RWPE1 (cell line): ENCODE measurements at regions of chr5 and their contacts with region 1.

Region 1: GRCh38 chr5:176543428-176544173 is 5.5 kb upstream of the CDHR2 start:
- DNase-seq: peak; percentile 64
- H3K27ac ChIP-seq: peak overlapping the region; percentile 94
- CTCF ChIP-seq: no peak

Region 2: DNA sequence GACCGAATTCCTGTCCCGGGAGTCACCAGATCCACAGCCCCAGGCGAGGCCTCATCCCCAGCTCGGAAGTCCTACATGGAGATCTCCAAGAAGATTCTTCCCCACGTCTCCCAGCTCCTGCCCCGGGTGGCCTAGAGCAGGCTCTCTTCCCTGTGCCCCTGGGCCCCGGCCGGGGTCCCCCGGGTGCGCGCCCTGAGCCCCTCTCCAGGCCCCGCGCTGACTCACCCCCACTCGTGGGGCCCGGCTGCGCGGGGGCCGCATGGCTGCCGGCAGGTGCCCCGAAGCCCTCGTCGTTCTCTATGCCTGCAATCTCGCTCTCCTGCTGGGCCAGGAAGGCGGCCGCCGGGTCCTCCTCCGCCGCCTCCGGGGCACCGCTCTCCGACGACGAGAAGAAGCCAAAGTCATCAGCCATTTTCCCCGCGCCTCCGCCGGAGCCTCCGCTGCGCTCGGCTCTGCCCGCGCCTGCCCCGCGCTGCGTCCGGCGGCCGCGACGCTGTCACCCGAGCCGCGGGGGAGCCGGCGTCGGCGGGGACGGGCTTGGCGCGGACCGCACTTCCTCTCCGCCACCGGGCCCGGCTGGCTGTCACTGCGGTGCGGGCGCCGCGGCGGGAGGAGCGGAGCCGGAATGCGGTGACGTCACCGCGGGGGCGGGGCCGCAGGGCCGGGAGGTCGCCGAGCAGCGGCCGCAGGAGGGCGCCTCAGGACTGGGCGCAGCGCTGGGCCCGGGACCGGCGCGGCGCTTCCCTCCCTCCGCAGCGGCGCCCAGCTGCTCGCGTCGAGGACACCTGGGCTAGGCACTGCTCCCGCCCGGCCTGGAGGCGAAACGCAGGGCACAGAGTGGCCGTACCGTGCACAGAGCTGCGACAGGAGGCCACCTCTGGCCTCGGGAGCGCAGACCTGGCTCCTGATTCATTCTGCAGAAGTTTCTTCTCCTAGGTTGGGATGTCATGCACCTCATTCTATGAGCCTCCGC is 127.4 kb before region 1 on chr5 and contains the start of gene CLTB:
- CTCF ChIA-PET with region 1: interaction called, 18 read pairs
- POLR2A ChIA-PET with region 1: interaction called, 4 read pairs
- DNase-seq: peak; percentile 90
- H3K27ac ChIP-seq: peak within 1 kb of the TSS; percentile 99
- CTCF ChIP-seq: peak; percentile 99

Region 3: DNA sequence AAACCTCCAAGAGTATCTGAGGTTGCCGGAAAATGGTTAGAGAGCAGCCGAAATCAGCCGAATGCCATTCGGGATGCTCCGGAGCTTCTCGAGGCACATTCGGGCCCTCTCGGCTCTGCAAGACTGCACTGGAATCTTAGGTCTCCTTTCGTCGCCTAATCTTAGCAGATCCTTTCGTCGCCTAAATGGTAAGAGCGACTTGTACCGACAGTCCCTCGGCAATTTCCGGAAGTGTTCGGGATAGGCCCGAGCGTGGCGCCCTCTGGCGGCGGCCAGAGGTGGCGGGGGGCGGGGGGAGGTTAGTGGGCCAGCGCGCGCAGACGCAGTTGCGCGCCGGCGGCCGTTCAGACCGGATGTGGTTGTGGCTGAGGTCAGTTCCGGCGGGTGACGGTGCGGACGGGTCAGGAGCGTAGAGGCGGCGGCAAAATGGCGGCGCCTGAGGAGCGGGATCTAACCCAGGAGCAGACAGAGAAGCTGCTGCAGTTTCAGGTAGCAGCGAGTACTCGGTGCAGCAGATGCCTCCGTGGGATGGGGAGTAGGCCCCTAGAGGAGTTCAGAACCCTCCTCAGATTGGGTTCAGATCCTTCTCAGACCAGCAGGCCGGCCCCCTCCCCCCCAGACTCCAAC is 95.5 kb before region 1 on chr5 and contains the start of gene FAF2:
- CTCF ChIA-PET with region 1: interaction called, 10 read pairs
- POLR2A ChIA-PET with region 1: interaction called, 5 read pairs
- DNase-seq: peak; percentile 100
- H3K27ac ChIP-seq: peak within 1 kb of the TSS; percentile 97
- CTCF ChIP-seq: peak; percentile 100

Region 4: DNA sequence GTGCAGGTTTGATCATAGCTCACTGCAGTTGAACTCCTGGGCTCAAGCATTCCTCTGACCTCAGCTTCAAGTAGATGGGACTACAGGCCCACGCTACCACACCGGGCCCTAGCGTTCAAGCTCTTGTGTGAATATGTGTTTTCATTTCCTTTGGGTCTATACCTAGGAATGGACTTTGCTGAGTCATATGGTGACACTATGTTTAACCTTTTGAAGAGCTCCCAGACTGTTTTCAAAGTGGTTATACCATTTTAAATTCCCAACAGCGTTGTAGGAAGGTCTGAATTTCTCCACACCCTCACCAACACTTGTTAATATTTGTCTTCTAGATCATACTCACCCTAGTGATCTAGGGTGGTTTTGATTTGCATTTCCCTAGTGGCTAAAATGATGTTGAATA is 61.9 kb before region 1 on chr5:
- CTCF ChIA-PET with region 1: no interaction called
- POLR2A ChIA-PET with region 1: no interaction called
- DNase-seq: no peak
- H3K27ac ChIP-seq: peak overlapping the region; percentile 48
- CTCF ChIP-seq: no peak

Region 5: GRCh38 chr5:176561259-176561658 is 17.7 kb after region 1 on chr5:
- CTCF ChIA-PET with region 1: no interaction called
- POLR2A ChIA-PET with region 1: interaction called, 15 read pairs
- DNase-seq: no peak
- H3K27ac ChIP-seq: no peak overlapping the region
- CTCF ChIP-seq: no peak

Region 6: DNA sequence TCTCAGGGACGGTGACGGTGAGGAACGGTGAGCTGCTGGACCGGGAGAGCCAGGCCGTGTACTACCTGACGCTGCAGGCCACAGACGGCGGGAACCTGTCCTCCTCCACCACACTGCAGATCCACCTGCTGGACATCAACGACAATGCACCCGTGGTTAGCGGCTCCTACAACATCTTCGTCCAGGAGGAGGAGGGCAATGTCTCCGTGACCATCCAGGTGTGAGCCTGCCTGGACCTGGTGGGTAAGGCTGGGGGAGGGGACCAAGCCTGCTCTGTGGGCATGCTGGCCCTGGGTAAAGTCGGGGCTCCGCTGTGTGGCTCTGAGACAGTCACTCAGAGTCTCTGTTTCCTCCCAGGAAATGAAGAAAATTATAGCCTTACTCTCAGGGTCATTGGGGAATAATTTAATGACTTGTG is 34.8 kb after region 1 on chr5:
- CTCF ChIA-PET with region 1: interaction called, 14 read pairs
- POLR2A ChIA-PET with region 1: no interaction called
- DNase-seq: peak; percentile 90
- H3K27ac ChIP-seq: no peak overlapping the region
- CTCF ChIP-seq: peak; percentile 89

Region 7: DNA sequence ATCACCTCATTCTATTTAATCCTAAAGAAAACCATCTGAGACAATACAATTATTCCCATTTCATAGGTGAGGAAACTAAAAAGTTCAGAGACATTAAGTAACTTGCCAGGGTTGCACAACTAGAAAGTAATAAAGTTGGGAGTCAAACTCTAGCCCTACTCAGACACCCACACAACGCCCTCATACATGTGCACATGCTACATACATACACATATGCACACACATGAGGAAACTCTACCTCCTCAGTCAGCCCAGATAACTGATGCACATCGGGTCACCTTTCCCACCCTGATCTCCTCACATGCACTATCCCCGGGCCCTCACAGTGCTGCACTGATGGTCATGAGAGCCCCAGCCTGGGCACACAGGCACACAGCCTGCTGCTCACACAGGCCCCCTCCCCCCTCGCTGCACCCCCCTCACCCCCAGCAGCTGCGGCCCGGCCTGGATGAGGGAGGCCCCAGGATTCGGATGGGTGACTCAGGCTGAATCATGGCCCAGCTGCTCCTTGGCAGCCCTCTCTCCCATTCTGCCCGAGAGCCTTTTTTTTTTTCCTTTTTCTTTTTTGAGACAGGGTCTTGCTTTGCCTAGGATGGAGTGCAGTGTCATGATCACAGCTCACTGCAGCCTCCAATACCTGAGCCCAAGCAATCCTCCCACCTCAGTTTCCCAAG is 71.3 kb after region 1 on chr5:
- CTCF ChIA-PET with region 1: no interaction called
- POLR2A ChIA-PET with region 1: no interaction called
- DNase-seq: peak; percentile 91
- H3K27ac ChIP-seq: no peak overlapping the region
- CTCF ChIP-seq: no peak

Region 8: DNA sequence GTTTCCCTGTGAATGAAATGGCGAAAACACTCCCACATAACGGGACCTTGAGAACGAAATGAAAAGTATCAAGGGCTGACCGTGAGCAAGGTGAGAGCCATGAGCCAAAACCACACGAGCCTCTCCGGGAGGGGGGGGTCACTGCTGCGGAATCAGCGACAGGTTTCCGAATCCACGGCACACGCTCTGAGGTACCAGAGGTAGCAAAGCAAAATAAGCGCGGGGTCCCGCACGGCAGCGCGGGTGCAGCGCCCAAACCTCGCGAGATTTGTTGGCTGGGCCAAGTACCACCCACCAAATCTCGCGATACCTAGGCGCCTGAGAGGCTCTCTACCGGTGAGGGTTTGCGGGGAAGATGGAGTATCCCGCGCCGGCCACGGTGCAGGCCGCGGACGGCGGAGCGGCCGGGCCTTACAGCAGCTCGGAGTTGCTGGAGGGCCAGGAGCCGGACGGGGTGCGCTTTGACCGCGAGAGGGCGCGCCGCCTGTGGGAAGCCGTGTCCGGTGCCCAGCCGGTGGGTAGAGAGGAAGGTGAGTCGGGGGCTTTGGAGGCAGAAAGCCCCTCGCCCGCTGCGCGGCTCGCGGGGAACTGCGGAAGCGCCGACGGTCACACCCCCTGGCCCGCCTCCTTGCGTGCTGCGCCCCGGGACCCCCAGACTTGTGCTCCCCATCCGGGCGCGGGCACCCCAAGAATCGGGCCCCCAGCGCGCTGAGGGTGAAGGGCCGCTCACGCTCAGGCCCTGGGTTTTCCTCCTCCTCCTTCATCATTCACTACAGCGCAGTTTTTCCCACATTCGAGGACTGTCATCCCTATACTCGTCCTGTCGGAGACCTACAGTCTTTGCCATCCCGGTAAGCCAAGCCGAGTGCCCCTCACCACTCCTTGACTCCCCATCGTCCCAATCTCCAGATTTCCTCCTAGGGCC is 479.0 kb after region 1 on chr5 and contains the start of gene ZNF346:
- CTCF ChIA-PET with region 1: no interaction called
- POLR2A ChIA-PET with region 1: no interaction called
- DNase-seq: peak; percentile 100
- H3K27ac ChIP-seq: peak within 1 kb of the TSS; percentile 80
- CTCF ChIP-seq: peak; percentile 58